ENCODE measurements at regions of chr10 and their contacts with region 1.

Region 1: GRCh38 chr10:16225208-16225607 is 211.6 kb upstream of the PTER start:
- DNase-seq: no peak
- H3K4me3 Mint-ChIP-seq: no peak overlapping the region
- H3K27ac Mint-ChIP-seq: no peak overlapping the region
- H3K4me1 Mint-ChIP-seq: no peaks in the 10 kb centered on the region
- H3K27me3 Mint-ChIP-seq: no peaks in the 10 kb centered on the region

Region 2: DNA sequence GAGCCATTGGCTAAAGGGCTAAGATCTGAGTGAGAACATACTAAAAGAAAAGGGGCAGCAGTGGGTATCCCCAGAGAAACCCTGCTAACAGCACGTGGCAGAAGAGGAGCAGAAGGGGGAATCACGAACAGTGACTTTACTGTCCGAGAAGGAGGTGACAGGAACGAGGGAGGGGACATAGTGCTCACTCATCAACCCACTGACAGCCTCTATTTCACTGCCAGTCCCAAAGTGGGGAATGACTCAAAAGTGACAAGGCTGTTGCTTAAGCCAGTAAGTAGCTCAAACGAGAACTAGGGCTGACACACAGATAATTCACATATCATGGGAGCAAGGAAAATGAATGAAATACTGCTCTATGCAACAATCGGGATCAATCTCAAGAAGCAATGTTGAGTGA is 499.3 kb after region 1 on chr10:
- intact Hi-C with region 1: loop called (anchors 5 kb)
- DNase-seq: no peak
- H3K4me3 Mint-ChIP-seq: no peak overlapping the region
- H3K27ac Mint-ChIP-seq: no peak overlapping the region
- H3K4me1 Mint-ChIP-seq: peaks cover 14% of the 10 kb centered on the region
- H3K27me3 Mint-ChIP-seq: no peaks in the 10 kb centered on the region

Measured in activated T-helper 2 cell treated with anti-CD3 and anti-CD28 coated beads, Interferon-gamma antibody, Interleukin-2, Interleukin-4, amounts not matched to agents 10 μg/mL and 5 μg/mL and 100 μg/mL, durations not matched to agents 14 hours and 24 hours and 36 hours (primary cell).